ENCODE measurements at regions of chr11 and their contacts with region 1.

Region 1: DNA sequence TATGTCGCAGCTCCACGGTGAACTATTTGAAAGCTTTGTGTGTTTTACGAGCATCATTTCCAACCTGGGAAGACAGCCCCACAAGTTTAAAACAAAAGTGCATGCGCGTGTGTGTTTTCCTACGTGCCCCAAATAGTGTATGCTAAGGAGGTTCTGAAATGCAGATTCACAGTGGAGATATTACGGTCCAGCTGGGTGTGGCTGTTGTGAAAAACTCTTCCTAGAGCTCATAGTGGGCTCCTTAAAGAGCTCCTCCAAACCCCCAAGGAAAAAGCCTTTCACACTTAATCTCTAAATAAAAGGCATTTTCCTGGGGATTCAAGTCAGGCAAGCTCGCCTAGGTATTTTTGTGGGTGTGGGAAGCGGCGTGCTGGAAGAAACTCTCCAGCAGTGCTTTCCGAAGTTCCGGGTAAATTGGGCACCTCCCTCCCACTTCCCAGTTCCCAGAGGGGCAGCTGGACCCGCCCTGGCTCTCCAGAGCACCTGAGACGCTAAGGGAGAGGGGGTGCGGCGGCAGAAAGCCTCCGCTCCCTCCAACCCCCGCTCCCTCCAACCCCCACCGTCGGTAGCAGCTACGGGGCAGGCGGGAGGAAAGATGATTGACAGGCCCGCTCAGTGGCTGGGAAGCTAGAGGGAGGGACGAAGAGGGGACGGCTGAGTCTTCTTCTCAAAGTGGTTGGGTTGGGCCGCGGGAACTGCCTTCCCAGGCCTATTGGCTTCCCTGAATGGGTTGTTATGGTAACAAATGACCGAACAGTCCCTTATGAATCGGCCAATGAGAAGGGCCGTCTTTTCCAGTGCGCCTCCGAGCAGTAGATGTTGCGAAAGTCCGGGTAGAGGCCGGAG is 558 bp upstream of the PCF11 start:
- DNase-seq: peak; percentile 99 to 100
- H3K4me3 ChIP-seq: peak overlapping the region; percentile 31
- H3K4me1 ChIP-seq: peaks cover 10% of the 10 kb centered on the region
- H3K27me3 ChIP-seq: no peaks in the 10 kb centered on the region

Region 2: DNA sequence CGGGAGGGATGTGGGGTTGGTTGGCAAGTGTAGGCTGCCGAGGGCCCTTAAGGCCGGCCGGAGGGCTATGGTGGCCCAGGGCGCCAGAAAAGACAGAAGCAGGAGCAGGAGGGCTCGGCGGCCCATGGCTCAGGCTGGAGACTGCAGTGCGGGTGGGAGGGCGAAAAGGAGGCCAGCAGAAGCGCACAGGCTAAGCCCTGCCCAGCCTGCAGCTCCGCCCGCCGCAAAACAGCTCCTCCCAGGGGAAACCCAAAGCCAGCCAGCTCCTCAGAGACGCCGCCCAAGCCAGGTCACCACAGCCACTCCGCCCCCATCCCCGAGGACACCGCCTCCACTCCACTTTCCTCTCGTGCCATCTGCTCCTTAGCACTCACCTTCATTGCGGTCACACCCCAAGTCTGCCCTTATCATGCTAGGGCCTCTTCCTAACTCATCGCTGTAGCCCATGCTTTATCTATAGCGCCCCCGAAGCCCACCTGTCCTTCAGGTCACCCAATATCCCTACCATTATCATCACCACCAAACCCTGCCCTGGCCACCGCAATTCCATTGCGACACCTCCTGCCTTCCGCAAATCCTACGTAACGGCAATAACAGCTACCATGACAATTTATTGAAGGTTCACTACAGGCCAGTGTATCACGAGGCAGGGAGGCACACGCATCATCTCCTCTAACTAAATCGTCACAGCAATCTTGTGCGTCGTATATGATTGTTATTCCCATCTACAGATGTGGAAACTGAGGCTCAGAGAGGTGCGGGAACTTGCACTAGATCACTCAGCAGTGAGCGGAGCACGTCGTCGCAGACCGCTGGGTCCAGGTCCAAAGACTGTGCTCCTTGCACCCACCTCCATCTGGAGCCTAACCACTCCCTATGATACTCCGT is 255.9 kb before region 1 on chr11 and contains the start of gene PRCP:
- in situ Hi-C with region 1: loop called (anchors 10 kb)
- DNase-seq: peak; percentile 97 to 98
- H3K4me3 ChIP-seq: peak within 1 kb of the TSS; percentile 60
- H3K4me1 ChIP-seq: peaks cover 28% of the 10 kb centered on the region
- H3K27me3 ChIP-seq: no peaks in the 10 kb centered on the region

Measured in HAP-1 (cell line).